ENCODE measurements at regions of chr22 and their contacts with region 1.

Region 1: DNA sequence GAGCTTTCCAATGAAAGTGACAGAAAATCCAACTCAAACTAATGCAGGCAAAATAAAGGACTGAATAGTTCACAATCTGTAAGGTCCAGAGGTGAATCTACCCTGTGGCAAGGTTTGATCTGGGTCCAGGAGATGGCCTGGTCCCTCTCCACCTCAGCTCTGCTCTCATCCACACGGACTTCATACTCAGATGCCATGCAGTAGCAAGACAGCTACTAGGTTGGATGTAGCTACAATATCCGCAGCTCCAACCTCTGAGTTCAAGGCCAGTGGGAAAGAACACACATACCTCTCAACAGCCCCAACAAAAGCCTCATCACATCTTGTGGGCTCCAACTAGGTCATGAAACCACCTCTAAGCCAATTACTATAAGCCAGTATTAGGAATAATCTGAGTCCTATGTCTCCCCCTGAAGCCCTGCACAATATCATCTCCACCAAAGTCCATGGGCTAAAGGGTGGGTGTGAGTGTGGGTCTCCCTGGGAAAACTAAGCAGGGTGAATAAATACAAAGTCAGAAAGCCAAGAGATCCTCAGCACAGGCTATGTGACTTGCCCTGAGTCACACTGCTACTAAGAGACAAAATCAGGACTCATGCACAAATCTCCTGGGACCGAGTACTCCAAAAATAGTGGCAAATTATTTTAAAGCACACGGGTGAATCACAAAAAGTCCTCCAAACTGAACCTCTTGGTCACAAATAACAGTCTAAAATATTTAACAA is 78.8 kb downstream of the LARGE1 start:
- DNase-seq: peak; percentile 76
- H3K4me3 ChIP-seq: peak overlapping the region; percentile 60
- H3K27ac ChIP-seq: peak overlapping the region; percentile 93
- H3K4me1 ChIP-seq: peaks cover 59% of the 10 kb centered on the region
- CTCF ChIP-seq: no peak

Region 2: DNA sequence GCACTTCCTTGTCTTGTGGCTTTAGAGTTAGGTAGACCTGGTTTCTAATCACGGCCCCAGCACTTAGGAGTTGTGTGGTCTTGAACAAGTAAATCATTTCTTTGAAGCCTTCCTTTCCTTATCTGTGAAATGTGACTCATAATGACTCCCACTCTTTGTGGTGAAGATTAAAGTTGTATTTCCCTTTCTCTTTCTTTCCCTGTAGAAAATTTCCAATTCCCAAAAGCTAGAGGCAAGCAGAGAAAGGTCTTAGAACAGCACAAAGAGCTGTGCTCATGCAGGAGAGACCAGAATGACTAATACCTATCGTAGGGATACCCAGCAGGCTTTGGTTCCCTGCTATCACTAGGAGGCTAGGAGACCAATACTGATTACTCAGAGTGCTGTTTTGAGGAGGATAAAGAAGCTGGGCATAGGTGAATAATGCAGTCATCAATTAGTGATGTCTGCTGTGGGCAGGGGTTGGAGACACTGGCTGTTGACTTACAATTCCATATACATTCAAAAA is 512.6 kb before region 1 on chr22:
- CTCF ChIA-PET with region 1: no interaction called
- POLR2A ChIA-PET with region 1: no interaction called
- intact Hi-C with region 1: loop called (anchors 5 kb)
- DNase-seq: no peak
- H3K4me3 ChIP-seq: no peak overlapping the region
- H3K27ac ChIP-seq: no peak overlapping the region
- H3K4me1 ChIP-seq: peaks cover 41% of the 10 kb centered on the region
- CTCF ChIP-seq: no peak

Region 3: DNA sequence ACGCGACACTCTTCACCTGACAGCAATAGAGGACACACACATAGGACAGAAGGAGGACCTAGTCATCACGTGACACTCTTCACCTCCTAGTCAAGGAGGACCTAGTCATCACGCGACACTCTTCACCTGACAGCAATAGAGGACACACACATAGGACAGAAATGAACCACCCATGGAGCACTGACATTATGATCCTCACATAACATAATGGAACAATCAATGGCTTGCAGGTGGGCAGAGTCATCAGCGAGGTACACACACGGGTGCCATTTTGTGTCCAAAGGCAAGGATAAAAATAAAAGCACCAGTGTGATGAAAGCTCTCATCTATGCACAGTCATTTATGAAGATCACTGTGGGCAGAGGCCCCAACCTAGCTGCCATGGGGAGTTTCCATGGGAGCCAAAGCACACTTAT is 275.9 kb before region 1 on chr22:
- CTCF ChIA-PET with region 1: no interaction called
- POLR2A ChIA-PET with region 1: interaction called, 3 read pairs
- intact Hi-C with region 1: loop called (anchors 1 kb)
- DNase-seq: no peak
- H3K4me3 ChIP-seq: no peak overlapping the region
- H3K27ac ChIP-seq: no peak overlapping the region
- H3K4me1 ChIP-seq: peaks cover 62% of the 10 kb centered on the region
- CTCF ChIP-seq: no peak

Region 4: DNA sequence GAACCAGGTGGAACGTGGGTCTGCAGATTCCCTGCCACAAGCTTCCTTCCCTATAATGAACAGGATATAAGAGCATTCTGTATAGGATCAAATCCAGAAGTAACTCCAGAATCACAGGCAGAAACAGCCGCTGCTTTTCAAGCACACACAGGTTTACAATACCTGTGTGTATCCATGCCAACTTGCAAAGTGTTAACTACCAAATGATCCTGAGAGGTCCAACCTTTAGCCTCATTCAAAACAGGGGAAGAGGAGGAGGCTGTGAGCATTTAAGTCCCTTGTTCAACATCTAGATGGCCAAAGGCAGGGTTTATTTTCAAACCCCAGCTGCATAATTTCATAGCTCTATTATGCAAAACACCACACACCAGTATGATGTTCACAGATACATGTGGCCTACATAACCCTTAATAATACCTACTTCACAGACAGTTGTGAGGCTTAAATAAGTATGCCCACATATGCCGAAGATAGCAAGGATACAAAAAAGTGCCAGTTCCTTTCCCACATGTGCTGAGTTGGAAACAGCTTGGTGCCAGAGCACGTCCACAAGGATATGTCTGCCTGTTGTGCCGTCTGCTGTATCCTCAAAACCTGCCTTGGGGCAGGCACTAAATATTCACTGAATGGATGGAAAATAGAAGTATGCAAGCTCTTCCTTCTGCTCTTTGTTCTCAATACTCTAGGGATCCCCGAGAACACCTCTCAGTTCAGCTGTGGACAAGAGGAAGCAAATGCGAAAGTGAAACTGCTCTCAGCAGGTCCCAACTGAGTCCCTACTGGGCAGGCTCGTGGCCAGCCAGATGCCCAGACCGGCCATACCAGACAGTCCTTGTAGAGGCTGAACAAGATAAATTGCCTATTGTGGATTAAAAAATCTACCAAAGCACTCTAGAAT is 12.0 kb after region 1 on chr22:
- CTCF ChIA-PET with region 1: no interaction called
- POLR2A ChIA-PET with region 1: interaction called, 5 read pairs
- intact Hi-C with region 1: loop called (anchors 1 kb)
- DNase-seq: peak; percentile 91
- H3K4me3 ChIP-seq: peak overlapping the region; percentile 61
- H3K27ac ChIP-seq: peak overlapping the region; percentile 80
- H3K4me1 ChIP-seq: peaks cover 46% of the 10 kb centered on the region
- CTCF ChIP-seq: no peak

Region 5: DNA sequence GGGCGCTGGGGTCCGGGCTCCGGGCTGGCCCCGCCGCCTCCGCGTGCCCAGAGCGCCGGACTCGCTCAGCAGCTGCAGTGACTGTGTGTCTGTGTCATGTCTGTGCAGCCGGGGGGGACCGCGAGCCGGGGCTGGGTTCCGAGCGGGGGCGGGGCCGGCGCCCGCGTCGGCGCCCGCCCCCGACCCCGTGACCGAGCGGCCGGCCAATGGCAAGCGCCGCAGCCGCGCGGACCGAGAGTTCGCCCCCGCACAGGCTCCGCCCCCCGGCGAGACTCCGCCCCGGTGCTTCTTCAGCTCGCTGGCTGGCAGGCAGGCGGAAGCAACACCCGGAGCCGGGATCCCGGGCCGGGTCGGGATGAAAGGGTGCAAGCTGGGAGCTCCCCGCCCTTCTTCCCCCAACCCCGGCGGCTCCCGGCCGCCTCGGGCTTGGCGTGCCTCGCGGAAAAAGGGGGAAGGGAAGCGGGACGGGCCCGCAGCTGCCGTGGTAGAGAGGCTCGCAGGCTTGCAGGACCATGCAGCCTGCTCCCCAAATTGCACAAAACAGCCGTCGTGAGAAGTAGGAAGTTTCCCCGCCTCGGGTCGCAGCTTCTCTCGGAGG is 79.6 kb after region 1 on chr22:
- CTCF ChIA-PET with region 1: no interaction called
- POLR2A ChIA-PET with region 1: no interaction called
- intact Hi-C with region 1: loop called (anchors 2 kb)
- DNase-seq: peak; percentile 97
- H3K4me3 ChIP-seq: peak overlapping the region; percentile 74
- H3K27ac ChIP-seq: no peak overlapping the region
- H3K4me1 ChIP-seq: peaks cover 41% of the 10 kb centered on the region
- CTCF ChIP-seq: no peak